ENCODE measurements at regions of chr5 and their contacts with region 1.

Region 1: GRCh38 chr5:72523960-72524582 is 16.9 kb upstream of the ZNF366 start:
- DNase-seq: peak in 1 of 7 donors; percentile 26
- H3K4me3 ChIP-seq: no peak overlapping the region
- H3K27ac ChIP-seq: no peak overlapping the region
- H3K4me1 ChIP-seq: no peaks in the 10 kb centered on the region
- H3K27me3 ChIP-seq: no peaks in the 10 kb centered on the region
- CTCF ChIP-seq: peak; percentile 17 to 85 (median 70)
- POLR2A ChIP-seq: no peak

Region 2: DNA sequence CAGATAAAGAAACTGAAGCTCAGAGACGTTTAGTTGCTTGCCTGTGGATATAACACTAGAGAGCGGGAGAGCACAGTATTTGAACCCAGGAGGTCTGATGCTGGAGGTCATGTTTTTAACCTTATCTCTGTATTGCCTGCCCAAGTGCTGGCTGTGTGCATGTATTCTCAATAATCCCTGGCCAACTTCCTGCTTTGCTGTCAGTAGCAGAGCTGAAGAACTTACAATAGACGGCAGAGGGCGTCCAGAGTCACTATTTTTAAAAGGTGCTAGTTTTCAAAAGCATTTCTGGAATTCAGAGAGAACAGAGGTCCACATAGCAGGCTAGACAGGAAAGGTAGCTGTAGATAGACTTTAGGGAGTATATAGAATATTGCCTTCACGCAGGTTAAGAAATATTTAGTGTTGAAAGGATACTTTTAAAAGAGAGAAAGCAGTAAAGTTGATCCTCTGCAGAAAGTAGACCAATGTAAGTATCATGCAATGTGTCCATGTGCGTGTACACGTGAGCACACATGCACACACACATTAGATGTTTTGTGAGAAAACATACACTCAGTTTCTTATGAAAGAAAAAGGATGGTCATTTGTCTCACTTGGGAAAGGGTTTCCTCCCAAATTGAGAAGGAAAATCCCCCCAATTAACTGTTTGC is 157.6 kb before region 1 on chr5:
- intact Hi-C with region 1: loop called (anchors 5 to 10 kb)
- DNase-seq: peak; percentile 65 to 92 (median 75)
- H3K4me3 ChIP-seq: no peak overlapping the region
- H3K27ac ChIP-seq: no peak overlapping the region
- H3K4me1 ChIP-seq: peaks cover 0 to 13% of the 10 kb centered on the region in 2 donors
- H3K27me3 ChIP-seq: no peaks in the 10 kb centered on the region
- CTCF ChIP-seq: peak; percentile 69 to 89 (median 86)
- POLR2A ChIP-seq: no peak

Region 3: GRCh38 chr5:72402959-72403628 is 121.0 kb before region 1 on chr5:
- intact Hi-C with region 1: loop called in 1 of 2 experiments (anchors 10 kb)
- DNase-seq: peak in 5 of 7 donors; percentile 28 to 70 (median 43)
- H3K4me3 ChIP-seq: no peak overlapping the region
- H3K27ac ChIP-seq: peak overlapping the region in 1 of 5 donors; percentile 41
- H3K4me1 ChIP-seq: no peaks in the 10 kb centered on the region
- H3K27me3 ChIP-seq: no peaks in the 10 kb centered on the region
- CTCF ChIP-seq: peak; percentile 19 to 52 (median 45)
- POLR2A ChIP-seq: no peak